T-cell (primary cell): ENCODE measurements at regions of chr3 and their contacts with region 1.

Region 1: GRCh38 chr3:194465920-194466570 is 20.8 kb downstream of the ATP13A3 start:
- DNase-seq: no peak
- ATAC-seq: no peak
- H3K4me3 ChIP-seq: no peak overlapping the region
- H3K4me3 Mint-ChIP-seq: no peak overlapping the region
- H3K27ac ChIP-seq: no peak overlapping the region
- H3K27ac Mint-ChIP-seq: no peak overlapping the region
- H3K4me1 ChIP-seq: peaks cover 0 to 2% of the 10 kb centered on the region in 2 experiments
- H3K4me1 Mint-ChIP-seq: peaks cover 16 to 19% (median 17%) of the 10 kb centered on the region in 3 donors
- H3K27me3 ChIP-seq: no peaks in the 10 kb centered on the region
- H3K27me3 Mint-ChIP-seq: no peaks in the 10 kb centered on the region

Region 2: DNA sequence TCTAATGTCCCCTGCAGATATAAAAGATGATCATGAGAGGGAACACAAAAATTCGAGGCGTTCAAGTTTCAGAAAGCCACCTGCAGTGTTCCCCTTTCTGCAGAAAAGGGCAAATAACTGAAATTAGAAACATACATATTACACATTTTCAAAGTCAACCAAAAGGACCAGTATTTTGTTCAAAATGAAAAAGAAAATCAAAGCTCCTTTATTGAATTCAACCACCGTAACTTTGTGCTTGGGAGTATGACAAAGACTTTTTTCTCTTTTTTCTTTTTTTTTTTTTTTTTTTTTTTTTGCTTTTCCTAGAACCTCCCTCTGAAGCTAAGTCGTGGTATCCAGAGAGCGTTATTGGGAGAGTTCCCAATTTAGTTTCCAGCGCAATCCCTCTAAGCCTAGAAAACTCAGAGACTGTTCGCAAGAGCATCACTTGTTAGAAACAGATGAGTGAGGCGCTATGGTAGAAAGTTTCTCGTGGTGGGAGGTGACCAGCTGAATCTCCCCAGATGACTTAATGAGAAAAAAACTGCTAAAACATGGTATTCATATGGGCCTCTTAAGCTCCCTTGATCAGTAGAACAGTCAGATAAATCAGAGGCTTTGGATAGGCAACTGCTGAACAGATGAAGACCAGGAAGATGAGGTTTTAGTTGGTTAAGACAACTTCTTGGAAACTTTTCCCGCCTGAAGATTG is 1625.8 kb before region 1 on chr3:
- CTCF ChIA-PET with region 1: interaction called in 1 of 2 experiments, 13 read pairs
- POLR2A ChIA-PET with region 1: no interaction called
- DNase-seq: no peak
- ATAC-seq: no peak
- H3K4me3 ChIP-seq: no peak overlapping the region
- H3K4me3 Mint-ChIP-seq: no peak overlapping the region
- H3K27ac ChIP-seq: no peak overlapping the region
- H3K27ac Mint-ChIP-seq: no peak overlapping the region
- H3K4me1 ChIP-seq: no peaks in the 10 kb centered on the region
- H3K4me1 Mint-ChIP-seq: peaks cover 24 to 44% (median 25%) of the 10 kb centered on the region in 3 donors
- H3K27me3 ChIP-seq: no peaks in the 10 kb centered on the region
- H3K27me3 Mint-ChIP-seq: no peaks in the 10 kb centered on the region

Region 3: DNA sequence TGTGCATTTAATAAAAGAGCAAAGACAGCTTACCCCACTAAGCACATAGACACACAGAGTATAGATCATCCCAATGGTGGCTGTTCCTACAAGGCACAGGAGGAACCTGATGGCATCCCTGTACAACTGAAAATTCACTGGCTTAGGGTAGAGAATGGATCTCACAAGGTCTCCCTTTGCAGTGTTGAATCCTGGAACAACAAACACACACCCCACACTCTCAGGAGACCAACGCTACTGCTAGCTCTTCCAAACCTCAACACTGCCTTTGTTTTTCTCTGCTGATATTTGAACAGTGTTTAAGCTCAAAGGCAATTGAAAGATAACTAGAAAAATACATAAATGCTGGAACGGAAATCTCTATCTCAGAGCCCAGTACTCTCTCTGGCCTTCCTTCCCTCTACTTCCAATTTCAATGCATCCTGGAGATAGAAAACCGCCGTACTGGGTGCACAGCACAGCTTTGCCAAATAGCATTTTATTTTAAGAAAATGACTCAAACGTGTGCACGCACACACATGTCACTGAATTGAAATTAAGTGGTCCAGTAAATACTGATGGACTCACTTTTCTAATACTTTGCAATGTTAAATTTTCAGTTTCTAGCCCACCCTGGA is 999.9 kb before region 1 on chr3:
- CTCF ChIA-PET with region 1: interaction called in 1 of 2 experiments, 11 read pairs
- POLR2A ChIA-PET with region 1: no interaction called
- DNase-seq: no peak
- ATAC-seq: no peak
- H3K4me3 ChIP-seq: no peak overlapping the region
- H3K4me3 Mint-ChIP-seq: no peak overlapping the region
- H3K27ac ChIP-seq: no peak overlapping the region
- H3K27ac Mint-ChIP-seq: no peak overlapping the region
- H3K4me1 ChIP-seq: no peaks in the 10 kb centered on the region
- H3K4me1 Mint-ChIP-seq: peaks cover 0 to 5% (median 4%) of the 10 kb centered on the region in 3 donors
- H3K27me3 ChIP-seq: peaks cover 0 to 3% of the 10 kb centered on the region in 2 experiments
- H3K27me3 Mint-ChIP-seq: no peaks in the 10 kb centered on the region